ENCODE measurements at regions of chr1 and their contacts with region 1.

Region 1: GRCh38 chr1:39183503-39184353 is 20.8 kb upstream of the MACF1 start:
- DNase-seq: peak; percentile 85
- ATAC-seq: peak; percentile 84
- H3K4me3 Mint-ChIP-seq: no peak overlapping the region
- H3K27ac Mint-ChIP-seq: peak overlapping the region; percentile 71
- H3K4me1 Mint-ChIP-seq: peaks cover 46% of the 10 kb centered on the region
- H3K27me3 Mint-ChIP-seq: no peaks in the 10 kb centered on the region

Region 2: DNA sequence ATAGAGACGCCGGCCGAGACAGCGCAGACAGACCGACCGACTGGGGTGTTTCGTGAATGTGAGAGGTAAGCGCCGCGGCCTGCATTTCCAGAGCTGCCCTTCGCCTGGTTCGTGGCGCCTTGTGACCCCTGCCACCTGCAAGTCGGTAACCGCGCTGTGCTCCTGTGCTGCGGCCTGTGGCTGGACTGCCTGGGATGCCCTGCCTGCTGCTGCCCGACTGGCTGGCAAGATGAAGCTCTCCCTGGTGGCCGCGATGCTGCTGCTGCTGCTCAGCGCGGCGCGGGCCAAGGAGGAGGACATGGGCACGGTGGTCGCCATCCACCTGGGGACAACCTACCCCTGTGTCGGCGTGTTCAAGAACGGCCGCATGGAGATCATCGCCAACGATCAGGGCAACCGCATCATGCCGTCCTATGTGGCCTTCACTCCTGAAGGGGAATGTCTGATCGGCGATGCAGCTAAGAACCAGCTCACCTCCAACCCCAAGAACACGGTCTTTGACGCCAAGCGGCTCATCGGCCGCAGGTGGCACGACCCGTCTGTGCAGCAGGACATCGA is 474.9 kb before region 1 on chr1:
- CTCF ChIA-PET with region 1: no interaction called
- DNase-seq: no peak
- ATAC-seq: no peak
- H3K4me3 Mint-ChIP-seq: no peak overlapping the region
- H3K27ac Mint-ChIP-seq: no peak overlapping the region
- H3K4me1 Mint-ChIP-seq: no peaks in the 10 kb centered on the region
- H3K27me3 Mint-ChIP-seq: peaks cover 33% of the 10 kb centered on the region

Region 3: GRCh38 chr1:39170731-39171667 is 12.7 kb before region 1 on chr1:
- CTCF ChIA-PET with region 1: interaction called, 14 read pairs
- DNase-seq: no peak
- ATAC-seq: no peak
- H3K4me3 Mint-ChIP-seq: no peak overlapping the region
- H3K27ac Mint-ChIP-seq: no peak overlapping the region
- H3K4me1 Mint-ChIP-seq: no peaks in the 10 kb centered on the region
- H3K27me3 Mint-ChIP-seq: peaks cover 2% of the 10 kb centered on the region

Region 4: GRCh38 chr1:39238476-39238875 is 54.7 kb after region 1 on chr1:
- CTCF ChIA-PET with region 1: no interaction called
- DNase-seq: no peak
- ATAC-seq: no peak
- H3K4me3 Mint-ChIP-seq: no peak overlapping the region
- H3K27ac Mint-ChIP-seq: peak overlapping the region; percentile 5
- H3K4me1 Mint-ChIP-seq: peaks cover 29% of the 10 kb centered on the region
- H3K27me3 Mint-ChIP-seq: no peaks in the 10 kb centered on the region